Esophagus muscularis mucosa (tissue), 4 donors: ENCODE measurements at regions of chr11 and their contacts with region 1.

Region 1: DNA sequence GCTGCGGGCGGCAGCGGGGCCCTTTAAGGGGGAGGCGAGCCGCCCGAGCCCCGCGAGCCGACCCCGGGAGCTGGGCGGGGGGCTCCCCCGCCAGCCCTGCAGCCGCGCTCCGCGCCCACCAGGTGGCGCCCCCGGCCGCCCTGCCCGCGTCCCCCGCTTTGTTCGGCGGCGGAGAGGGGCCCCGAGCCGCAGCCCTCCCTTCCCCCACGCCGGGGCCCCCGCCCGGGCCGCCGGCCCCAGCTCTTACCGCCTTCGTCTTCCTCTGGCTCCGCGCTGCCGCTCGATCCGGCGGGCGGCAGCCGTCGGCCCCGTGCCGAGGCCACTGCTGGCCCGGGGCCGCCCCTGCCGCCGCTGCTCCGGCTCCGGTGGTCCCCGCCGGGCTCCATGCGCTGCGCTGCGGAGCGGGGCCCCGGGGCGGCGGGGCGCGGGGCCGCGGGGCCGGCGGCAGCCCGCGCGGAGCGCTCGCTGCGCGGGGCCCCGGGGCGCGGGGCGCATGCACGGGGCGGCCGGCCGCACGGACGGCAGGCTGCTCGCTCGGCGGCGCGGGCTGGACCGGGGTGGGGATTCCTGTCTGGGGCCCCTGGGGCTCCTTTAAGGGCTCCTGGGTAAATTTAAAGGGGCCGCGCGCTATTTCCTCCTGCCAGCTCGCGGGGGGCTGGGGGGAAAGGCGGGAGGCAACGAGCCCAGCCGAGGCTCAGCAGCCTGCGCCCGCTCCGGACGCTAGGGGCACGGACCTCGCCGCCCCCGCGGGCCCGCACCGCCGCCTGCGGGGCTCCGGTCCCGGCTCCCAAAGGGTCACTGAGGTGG is at the start of gene ZFTA:
- DNase-seq: no peak
- H3K4me3 ChIP-seq: peak within 1 kb of the TSS; percentile 77 to 99 (median 85)
- H3K27ac ChIP-seq: peak within 1 kb of the TSS; percentile 86 to 93 (median 92)
- H3K4me1 ChIP-seq: peaks cover 35 to 55% (median 52%) of the 10 kb centered on the region in 4 donors
- H3K27me3 ChIP-seq: no peaks in the 10 kb centered on the region
- CTCF ChIP-seq: peak; percentile 75 to 89 (median 86)
- EP300 ChIP-seq: no peak
- POLR2A ChIP-seq: no peak
- total RNA-seq, gene ZFTA: 15.8 to 41.9 (median 26.6) TPM

Region 2: GRCh38 chr11:63710476-63711217 is 57.8 kb before region 1 on chr11:
- intact Hi-C with region 1: no loop called
- DNase-seq: no peak
- H3K4me3 ChIP-seq: no peak overlapping the region
- H3K27ac ChIP-seq: no peak overlapping the region
- H3K4me1 ChIP-seq: peaks cover 5 to 21% (median 17%) of the 10 kb centered on the region in 4 donors
- H3K27me3 ChIP-seq: no peaks in the 10 kb centered on the region
- CTCF ChIP-seq: no peak
- EP300 ChIP-seq: no peak
- POLR2A ChIP-seq: no peak

Region 3: DNA sequence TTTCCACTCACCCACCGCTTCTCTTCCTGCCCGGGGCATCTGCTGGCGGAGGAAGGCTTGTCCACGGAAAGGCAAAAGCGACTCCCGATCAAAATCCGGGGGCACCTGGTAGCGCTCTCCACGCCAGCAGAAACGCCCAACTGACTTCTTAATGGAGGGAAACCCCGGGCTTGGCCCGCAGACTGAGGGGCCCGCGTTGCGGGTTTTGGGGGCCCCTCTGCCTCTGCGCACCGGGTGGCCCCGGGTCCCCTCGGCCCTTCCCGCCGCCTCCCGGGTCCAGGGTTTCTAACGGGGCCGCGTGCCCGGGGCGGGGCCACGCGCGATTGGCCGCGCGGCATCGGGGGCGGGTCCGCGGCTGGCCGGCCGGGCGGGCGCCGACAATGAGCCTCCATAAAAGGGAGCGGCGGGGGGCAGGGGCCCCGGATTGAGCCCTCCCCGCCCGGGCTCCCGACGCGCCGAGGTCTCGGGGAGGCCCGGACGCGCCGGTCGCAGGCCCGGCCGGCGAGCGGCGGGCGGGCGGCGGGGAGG is 44.7 kb after region 1 on chr11 and contains the start of gene SPINDOC:
- intact Hi-C with region 1: loop called (anchors 2 kb)
- DNase-seq: peak; percentile 93
- H3K4me3 ChIP-seq: peak within 1 kb of the TSS; percentile 77 to 98 (median 92)
- H3K27ac ChIP-seq: peak within 1 kb of the TSS; percentile 87 to 91 (median 88)
- H3K4me1 ChIP-seq: peaks cover 17 to 50% (median 37%) of the 10 kb centered on the region in 4 donors
- H3K27me3 ChIP-seq: no peaks in the 10 kb centered on the region
- CTCF ChIP-seq: no peak
- EP300 ChIP-seq: no peak
- POLR2A ChIP-seq: no peak
- total RNA-seq, gene SPINDOC: 12.0 to 25.8 (median 18.6) TPM

Region 4: GRCh38 chr11:63945477-63946163 is 177.2 kb after region 1 on chr11:
- intact Hi-C with region 1: loop called (anchors 5 kb)
- DNase-seq: no peak
- H3K4me3 ChIP-seq: peak overlapping the region; percentile 19 to 42 (median 28)
- H3K27ac ChIP-seq: peak overlapping the region; percentile 68 to 77 (median 75)
- H3K4me1 ChIP-seq: peaks cover 11 to 19% (median 16%) of the 10 kb centered on the region in 4 donors
- H3K27me3 ChIP-seq: no peaks in the 10 kb centered on the region
- CTCF ChIP-seq: peak; percentile 82 to 94 (median 87)
- EP300 ChIP-seq: no peak
- POLR2A ChIP-seq: no peak

Region 5: GRCh38 chr11:64152841-64153691 is 384.6 kb after region 1 on chr11:
- intact Hi-C with region 1: loop called (anchors 10 kb)
- DNase-seq: no peak
- H3K4me3 ChIP-seq: peak overlapping the region in 2 of 4 donors; percentile 7 to 25
- H3K27ac ChIP-seq: no peak overlapping the region
- H3K4me1 ChIP-seq: peaks cover 19 to 26% (median 22%) of the 10 kb centered on the region in 4 donors
- H3K27me3 ChIP-seq: no peaks in the 10 kb centered on the region
- CTCF ChIP-seq: peak in 2 of 3 experiments; percentile 94 to 99
- EP300 ChIP-seq: no peak
- POLR2A ChIP-seq: no peak